OCI-LY7 (cell line): ENCODE measurements at regions of chr2 and their contacts with region 1.

Region 1: GRCh38 chr2:31138037-31138962 is at the start of gene GALNT14:
- DNase-seq: peak; percentile 87
- H3K4me3 ChIP-seq: peak within 1 kb of the TSS; percentile 80
- H3K27ac ChIP-seq: peak within 1 kb of the TSS; percentile 30
- H3K4me1 ChIP-seq: peaks cover 30% of the 10 kb centered on the region
- CTCF ChIP-seq: peak; percentile 75
- total RNA-seq, gene GALNT14: 13.5 and 14.8 TPM in 2 replicates

Region 2: DNA sequence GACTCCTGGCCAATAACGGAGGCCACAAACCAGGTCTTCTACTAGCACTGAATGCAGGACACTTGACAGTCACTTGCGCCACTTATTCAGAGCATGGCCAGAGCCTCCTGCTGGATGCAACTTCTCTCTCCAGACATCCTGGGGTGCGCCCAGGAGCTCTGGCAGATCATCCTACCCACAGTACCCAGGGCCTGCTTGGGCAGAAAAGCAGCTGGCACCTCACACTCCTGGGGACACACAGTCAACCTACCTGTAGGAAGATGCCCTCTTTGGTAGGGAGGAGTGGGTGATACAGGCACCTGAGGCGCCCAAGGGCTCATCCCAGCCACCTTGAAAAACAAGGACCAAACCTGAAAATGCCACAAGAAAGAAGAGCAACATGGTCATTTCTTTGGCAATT is 13.4 kb before region 1 on chr2:
- CTCF ChIA-PET with region 1: interaction called, 19 read pairs
- POLR2A ChIA-PET with region 1: no interaction called
- intact Hi-C with region 1: no loop called
- DNase-seq: no peak
- H3K4me3 ChIP-seq: no peak overlapping the region
- H3K27ac ChIP-seq: no peak overlapping the region
- H3K4me1 ChIP-seq: no peaks in the 10 kb centered on the region
- CTCF ChIP-seq: no peak

Region 3: DNA sequence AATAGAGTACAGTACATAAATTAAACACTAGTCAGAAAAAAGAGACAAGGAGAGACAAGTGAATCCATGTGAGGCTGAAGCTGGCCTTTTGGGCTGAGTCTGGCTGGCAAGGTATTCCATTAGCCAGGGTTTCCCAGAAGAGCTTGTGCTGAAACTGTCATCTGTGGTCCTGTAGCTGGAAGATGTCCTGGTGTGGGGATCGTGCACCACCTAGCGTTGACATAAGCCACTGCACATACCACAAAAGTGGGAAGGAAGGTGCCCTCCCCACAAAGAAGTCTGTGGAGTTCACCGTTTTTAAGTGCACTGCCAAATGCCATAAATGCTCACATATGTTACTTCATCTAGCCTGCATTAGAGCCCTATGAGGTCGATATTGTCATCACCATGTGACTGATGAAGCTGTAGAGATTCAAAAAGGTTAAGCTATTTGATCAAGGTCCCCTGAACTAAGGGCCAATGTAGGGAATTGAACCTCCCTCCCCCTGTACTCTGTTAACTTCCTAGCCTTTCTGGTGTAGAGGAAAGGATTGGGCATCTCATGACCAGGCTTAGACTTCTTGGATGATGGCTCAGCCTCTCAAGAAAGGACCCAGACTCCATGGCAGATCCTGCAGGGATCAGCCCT is 31.9 kb after region 1 on chr2:
- CTCF ChIA-PET with region 1: interaction called, 3 read pairs
- POLR2A ChIA-PET with region 1: interaction called, 4 read pairs
- intact Hi-C with region 1: loop called (anchors 1 kb)
- DNase-seq: peak; percentile 78
- H3K4me3 ChIP-seq: no peak overlapping the region
- H3K27ac ChIP-seq: no peak overlapping the region
- H3K4me1 ChIP-seq: peaks cover 27% of the 10 kb centered on the region
- CTCF ChIP-seq: peak; percentile 99

Region 4: GRCh38 chr2:31263636-31264200 is 125.4 kb after region 1 on chr2:
- CTCF ChIA-PET with region 1: no interaction called
- POLR2A ChIA-PET with region 1: no interaction called
- intact Hi-C with region 1: loop called (anchors 2 kb)
- DNase-seq: peak; percentile 42
- H3K4me3 ChIP-seq: no peak overlapping the region
- H3K27ac ChIP-seq: no peak overlapping the region
- H3K4me1 ChIP-seq: peaks cover 22% of the 10 kb centered on the region
- CTCF ChIP-seq: peak; percentile 77

Region 5: GRCh38 chr2:31333527-31334183 is 195.4 kb after region 1 on chr2:
- CTCF ChIA-PET with region 1: no interaction called
- POLR2A ChIA-PET with region 1: no interaction called
- intact Hi-C with region 1: loop called (anchors 1 kb)
- DNase-seq: peak; percentile 85
- H3K4me3 ChIP-seq: no peak overlapping the region
- H3K27ac ChIP-seq: no peak overlapping the region
- H3K4me1 ChIP-seq: peaks cover 9% of the 10 kb centered on the region
- CTCF ChIP-seq: peak; percentile 100